PC-3 (cell line): ENCODE measurements at regions of chr2 and their contacts with region 1.

Region 1: GRCh38 chr2:72150157-72150865 is 2.6 kb upstream of the CYP26B1 start:
- DNase-seq: peak; percentile 93
- ATAC-seq: peak; percentile 80
- H3K4me3 ChIP-seq: peak overlapping the region; percentile 74
- H3K27ac ChIP-seq: no peak overlapping the region
- H3K4me1 ChIP-seq: peaks cover 24% of the 10 kb centered on the region
- H3K27me3 ChIP-seq: peaks cover 29% of the 10 kb centered on the region
- CTCF ChIP-seq: peak; percentile 81

Region 2: DNA sequence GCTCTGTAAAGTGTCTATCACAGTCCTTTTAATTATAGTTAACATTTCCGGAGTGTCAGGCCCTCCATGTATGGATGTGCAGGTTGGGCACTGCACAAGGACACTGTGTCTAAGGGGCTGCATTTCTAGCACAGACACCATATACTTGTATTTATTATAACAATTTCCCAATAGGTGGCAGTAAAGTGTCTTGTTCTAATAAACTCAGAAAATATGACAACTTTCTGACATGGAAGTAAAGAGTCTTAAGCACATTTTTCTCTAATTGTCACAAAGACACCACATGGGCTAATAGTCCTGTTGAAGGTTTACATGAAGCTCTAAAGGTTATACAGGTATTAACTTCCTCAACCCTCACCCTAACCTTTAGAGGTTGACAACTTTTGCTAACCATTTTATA is 540.4 kb before region 1 on chr2:
- CTCF ChIA-PET with region 1: no interaction called
- POLR2A ChIA-PET with region 1: no interaction called
- intact Hi-C with region 1: loop called (anchors 5 kb)
- DNase-seq: peak; percentile 77
- ATAC-seq: peak; percentile 77
- H3K4me3 ChIP-seq: no peak overlapping the region
- H3K27ac ChIP-seq: no peak overlapping the region
- H3K4me1 ChIP-seq: peaks cover 5% of the 10 kb centered on the region; the same call in 1 of the 2 replicates
- H3K27me3 ChIP-seq: no peaks in the 10 kb centered on the region
- CTCF ChIP-seq: peak; percentile 63

Region 3: DNA sequence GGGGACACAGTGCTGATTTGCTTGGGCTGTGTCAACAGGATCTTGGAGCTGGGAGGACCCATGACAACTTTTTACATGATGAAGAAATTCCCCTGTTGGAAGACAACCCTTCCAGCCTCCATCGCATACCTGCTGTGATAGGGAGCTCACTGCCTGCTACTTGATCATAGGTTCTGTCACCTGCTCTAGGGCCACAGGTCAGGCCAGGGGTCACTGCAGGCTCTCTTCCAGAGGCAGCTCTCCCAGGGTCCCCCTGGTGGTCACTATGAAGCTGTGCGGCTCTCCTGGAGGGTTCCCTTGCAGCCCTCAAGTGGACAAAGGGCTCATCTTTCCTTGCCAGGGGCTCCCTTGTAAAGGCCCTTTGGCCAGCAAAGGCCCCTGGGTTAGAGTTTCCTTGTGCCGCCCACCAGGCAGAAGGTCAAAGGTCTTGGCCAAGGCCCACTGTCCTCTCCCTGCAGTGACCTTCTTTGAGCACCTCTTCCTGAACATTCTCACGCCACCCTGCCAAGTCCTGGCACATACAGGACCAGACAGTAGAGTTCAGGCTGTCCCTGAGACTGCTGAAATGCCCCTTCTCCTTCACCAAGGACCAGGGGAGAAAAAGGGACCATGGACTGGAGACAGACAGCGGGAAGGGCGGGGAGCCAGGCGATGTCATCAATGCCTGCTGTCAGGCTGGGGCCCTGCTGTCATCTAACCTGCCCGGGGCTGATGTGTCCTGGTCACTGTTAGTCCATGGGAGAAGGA is 351.9 kb before region 1 on chr2:
- CTCF ChIA-PET with region 1: interaction called, 3 read pairs
- POLR2A ChIA-PET with region 1: no interaction called
- intact Hi-C with region 1: loop called (anchors 1 kb)
- DNase-seq: peak; percentile 53
- ATAC-seq: peak; percentile 34
- H3K4me3 ChIP-seq: no peak overlapping the region
- H3K27ac ChIP-seq: no peak overlapping the region
- H3K4me1 ChIP-seq: peaks cover 21% of the 10 kb centered on the region
- H3K27me3 ChIP-seq: no peaks in the 10 kb centered on the region
- CTCF ChIP-seq: peak; percentile 94

Region 4: GRCh38 chr2:71933467-71934319 is 216.6 kb before region 1 on chr2:
- CTCF ChIA-PET with region 1: interaction called, 10 read pairs
- POLR2A ChIA-PET with region 1: no interaction called
- intact Hi-C with region 1: loop called (anchors 1 kb)
- DNase-seq: peak; percentile 39
- ATAC-seq: peak; percentile 74
- H3K4me3 ChIP-seq: no peak overlapping the region
- H3K27ac ChIP-seq: no peak overlapping the region
- H3K4me1 ChIP-seq: peaks cover 6% of the 10 kb centered on the region; the same call in 1 of the 2 replicates
- H3K27me3 ChIP-seq: no peaks in the 10 kb centered on the region
- CTCF ChIP-seq: peak; percentile 51

Region 5: DNA sequence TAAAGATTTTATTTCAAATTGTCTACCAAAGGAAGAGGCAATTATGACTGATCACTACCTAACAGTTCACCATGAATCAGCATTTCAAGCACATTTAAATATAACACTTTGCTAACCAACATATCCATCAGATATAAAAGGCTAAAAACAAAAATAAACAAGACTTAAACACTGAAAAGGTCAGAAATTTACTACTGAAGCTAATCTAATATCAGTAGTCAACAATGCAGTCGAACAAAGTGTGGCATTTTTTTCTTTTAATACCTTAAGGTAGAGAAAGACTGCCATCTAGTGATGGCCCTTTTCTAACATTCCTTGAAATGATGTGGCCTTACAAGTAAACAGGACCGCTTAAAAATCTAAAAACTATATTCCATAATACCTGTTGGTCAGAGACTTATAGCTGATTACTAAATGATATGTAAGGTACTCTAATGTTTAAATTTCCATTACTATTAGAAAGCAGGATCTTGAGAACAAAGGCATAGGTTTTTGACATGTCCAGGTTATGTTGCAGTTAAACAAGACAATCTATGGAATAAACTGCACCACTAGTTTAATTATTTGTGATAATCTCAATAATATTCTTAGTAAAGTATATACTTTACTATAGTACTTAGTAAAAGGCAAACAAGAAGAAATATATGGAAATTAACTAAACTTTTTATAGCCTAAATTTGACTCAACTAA is 595.5 kb after region 1 on chr2:
- CTCF ChIA-PET with region 1: no interaction called
- POLR2A ChIA-PET with region 1: no interaction called
- intact Hi-C with region 1: loop called (anchors 1 kb)
- DNase-seq: peak; percentile 85
- ATAC-seq: peak; percentile 57
- H3K4me3 ChIP-seq: no peak overlapping the region
- H3K27ac ChIP-seq: no peak overlapping the region
- H3K4me1 ChIP-seq: peaks cover 19% of the 10 kb centered on the region
- H3K27me3 ChIP-seq: no peaks in the 10 kb centered on the region
- CTCF ChIP-seq: peak; percentile 92